ENCODE measurements at regions of chr10 and their contacts with region 1.

Region 1: GRCh38 chr10:95290461-95291364 is at the start of gene PDLIM1:
- DNase-seq: peak; percentile 58
- H3K4me3 ChIP-seq: peak within 1 kb of the TSS; percentile 61 to 91 (median 70)
- H3K27ac ChIP-seq: peak within 1 kb of the TSS; percentile 44
- H3K4me1 ChIP-seq: peaks cover 35% of the 10 kb centered on the region
- H3K27me3 ChIP-seq: no peaks in the 10 kb centered on the region
- CTCF ChIP-seq: peak in 1 of 2 donors; percentile 30
- POLR2A ChIP-seq: peak; percentile 57
- total RNA-seq, gene PDLIM1: 70.4 and 122 TPM in 2 replicates

Region 2: DNA sequence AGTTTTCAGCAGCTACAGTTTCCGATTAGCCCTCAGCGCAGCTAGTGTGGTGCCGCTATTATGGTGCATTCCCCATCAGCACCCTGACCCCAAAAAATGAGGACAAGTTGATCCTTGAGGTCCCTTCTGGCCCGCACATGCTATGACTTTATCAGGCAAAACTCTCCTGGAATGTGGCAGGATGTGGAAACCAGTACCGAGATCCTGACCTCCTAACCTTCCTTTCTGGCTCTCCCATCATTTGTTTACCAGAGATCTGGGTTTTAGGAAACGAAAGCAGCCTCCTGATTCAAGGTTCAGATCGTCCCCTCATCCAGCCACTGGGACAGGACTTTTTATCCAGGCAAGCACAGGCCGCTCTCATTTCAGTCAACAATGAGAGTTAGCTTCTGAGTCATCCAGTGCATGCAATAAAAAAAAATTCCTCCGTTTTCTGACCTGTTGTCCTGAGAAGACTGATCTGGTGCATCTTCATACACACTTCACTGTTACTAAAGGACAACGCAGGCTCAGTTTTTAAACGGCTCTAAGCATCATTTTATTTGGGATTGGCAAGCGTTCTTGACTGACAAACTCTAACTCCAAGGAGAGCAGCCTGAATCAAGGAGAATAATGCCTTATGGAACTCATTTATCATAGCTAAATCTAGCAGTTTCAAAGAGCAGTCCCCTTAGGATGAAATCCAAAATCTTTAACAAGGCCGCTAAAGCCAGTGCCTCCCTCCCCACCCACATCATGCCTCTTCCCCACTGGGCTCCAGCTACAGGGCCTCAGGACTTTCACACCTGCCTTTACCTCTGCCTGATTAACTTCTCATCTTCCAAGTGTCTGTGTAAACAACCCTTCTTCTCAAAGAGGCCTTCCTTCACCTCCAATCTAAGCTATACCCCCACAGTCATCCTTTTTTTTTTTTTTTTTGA is 17.1 kb before region 1 on chr10:
- CTCF ChIA-PET with region 1: interaction called, 6 read pairs
- POLR2A ChIA-PET with region 1: no interaction called
- dilution Hi-C with region 1: no loop called
- intact Hi-C with region 1: loop called (anchors 2 kb)
- DNase-seq: peak; percentile 89
- H3K4me3 ChIP-seq: peak overlapping the region in 1 of 3 experiments; percentile 23
- H3K27ac ChIP-seq: peak overlapping the region; percentile 76
- H3K4me1 ChIP-seq: peaks cover 22% of the 10 kb centered on the region
- H3K27me3 ChIP-seq: no peaks in the 10 kb centered on the region
- CTCF ChIP-seq: no peak
- POLR2A ChIP-seq: no peak

Region 3: DNA sequence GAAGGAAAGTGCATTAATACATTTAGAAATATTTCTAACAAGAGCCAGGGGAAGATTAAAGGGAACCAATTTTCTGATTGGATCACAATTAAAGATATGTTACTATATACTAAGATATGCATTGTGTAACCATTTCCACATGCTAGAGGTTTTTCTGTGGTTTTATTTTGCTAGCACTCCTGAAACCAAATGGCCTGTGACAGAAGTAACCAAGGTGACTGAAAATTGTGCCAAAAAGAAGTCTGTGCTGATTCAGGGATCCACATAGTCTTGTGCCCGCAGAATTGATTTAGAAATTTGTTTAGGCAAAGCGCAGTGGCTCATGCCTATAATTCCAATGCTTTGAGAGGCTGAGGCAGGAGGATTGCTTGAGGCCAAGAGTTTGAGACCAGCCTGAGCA is 618.8 kb after region 1 on chr10:
- CTCF ChIA-PET with region 1: no interaction called
- POLR2A ChIA-PET with region 1: no interaction called
- dilution Hi-C with region 1: no loop called
- intact Hi-C with region 1: no loop called
- DNase-seq: no peak
- H3K4me3 ChIP-seq: no peak overlapping the region
- H3K27ac ChIP-seq: no peak overlapping the region
- H3K4me1 ChIP-seq: peaks cover 4% of the 10 kb centered on the region
- H3K27me3 ChIP-seq: peaks cover 0 to 1% of the 10 kb centered on the region in 2 experiments
- CTCF ChIP-seq: no peak
- POLR2A ChIP-seq: no peak